Right cardiac atrium (tissue), 5 donors: ENCODE measurements at regions of chr5 and their contacts with region 1.

Region 1: DNA sequence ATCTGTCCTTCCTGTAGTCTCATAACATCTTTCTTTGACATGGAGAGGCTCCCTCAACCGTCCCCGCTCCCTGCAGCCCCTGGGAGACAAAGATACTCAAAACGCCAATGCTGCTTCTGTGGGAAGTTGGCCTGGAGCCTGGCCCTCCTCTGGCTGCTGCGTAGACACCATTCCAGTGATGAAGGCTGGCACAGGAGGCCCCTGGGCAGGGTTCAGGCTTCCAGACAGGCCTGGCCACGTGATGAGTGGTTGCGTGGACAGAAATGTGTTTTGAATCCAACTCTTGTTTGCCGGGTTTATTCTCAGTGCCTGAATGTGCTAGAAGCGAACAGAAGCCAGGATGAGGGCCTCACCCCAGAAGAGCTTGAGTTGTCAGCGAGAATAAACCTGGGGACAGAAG is 43.2 kb upstream of the NKX2-5 start:
- DNase-seq: peak; percentile 72 to 91 (median 88)
- ATAC-seq: peak; percentile 89 to 90
- H3K4me3 ChIP-seq: no peak overlapping the region
- H3K27ac ChIP-seq: peak overlapping the region; percentile 87
- H3K4me1 ChIP-seq: no peaks in the 10 kb centered on the region
- H3K27me3 ChIP-seq: no peaks in the 10 kb centered on the region

Region 2: DNA sequence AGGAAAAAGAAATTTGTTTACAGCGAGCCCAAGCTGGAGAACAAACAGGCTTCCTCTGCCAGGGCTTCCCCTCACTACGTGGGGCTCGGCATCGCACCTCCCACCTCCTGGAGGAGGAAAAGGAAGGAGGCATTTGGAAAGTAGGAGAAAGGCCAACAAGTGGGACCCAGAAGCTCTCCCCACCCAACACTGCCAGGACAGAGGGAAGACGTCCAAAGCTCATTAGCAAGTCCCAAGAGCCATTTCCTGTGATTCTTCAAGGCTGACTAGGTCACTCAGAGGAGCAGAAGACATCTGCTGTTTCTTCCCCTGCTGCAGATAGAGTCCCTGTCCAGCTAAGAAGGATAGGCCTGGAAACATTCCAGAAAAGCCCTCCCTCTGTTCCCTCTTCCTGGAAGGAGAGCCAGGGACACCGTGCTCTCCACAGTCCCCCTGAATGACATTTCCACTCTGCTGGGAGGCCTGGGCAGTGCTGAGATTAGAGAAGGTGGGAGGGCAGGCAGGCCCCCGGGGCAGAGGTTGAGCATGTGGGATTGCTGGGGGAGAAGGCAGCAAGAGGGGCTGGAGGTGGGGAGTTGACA is 694.2 kb before region 1 on chr5:
- intact Hi-C with region 1: no loop called
- DNase-seq: peak; percentile 67 to 85 (median 84)
- ATAC-seq: peak; percentile 87 to 88
- H3K4me3 ChIP-seq: no peak overlapping the region
- H3K27ac ChIP-seq: peak overlapping the region; percentile 98
- H3K4me1 ChIP-seq: peaks cover 36% of the 10 kb centered on the region
- H3K27me3 ChIP-seq: no peaks in the 10 kb centered on the region

Region 3: DNA sequence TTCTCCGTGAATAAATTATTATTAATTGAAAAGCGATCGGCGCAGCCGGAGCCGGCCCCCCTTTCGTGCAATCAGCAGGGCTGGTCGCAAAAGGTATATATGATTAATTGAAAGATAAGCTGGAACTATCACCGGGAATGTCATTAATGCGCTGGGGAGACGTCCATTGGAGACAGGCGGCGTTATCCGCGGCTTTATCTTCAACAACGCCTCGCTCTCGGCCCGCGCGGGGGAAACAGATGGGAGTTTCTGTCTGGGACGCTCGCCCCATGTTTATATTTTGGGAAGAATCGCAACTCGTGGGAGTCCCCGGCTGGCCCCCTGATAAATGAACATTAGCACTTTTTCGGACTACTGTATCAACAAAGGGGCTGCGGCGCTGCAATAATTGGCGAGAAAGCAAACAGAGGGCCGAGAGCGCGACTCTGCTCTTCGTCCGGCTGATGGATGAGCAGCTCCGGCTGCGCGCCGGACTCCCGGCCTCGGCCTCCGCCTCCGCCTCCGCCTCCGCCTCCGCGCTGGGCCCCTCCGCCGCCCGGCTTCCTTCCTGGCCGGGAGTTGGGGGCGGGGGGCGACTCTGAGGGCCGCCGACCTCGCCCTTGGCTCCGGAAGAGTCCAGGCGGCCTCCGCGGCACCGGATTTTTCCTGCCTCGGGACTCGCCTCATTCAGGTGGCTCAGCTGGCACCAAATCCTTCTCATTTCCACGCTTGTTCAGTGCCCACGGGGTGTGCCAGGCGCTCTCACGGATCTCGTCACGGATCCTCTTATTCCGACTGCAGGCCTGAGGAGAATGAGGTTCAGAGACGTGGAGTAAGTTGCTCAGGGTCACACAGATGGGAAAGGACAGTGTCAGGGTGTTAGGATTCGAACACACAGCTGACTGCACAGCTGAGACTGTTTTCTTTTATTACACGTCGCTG is 39.6 kb before region 1 on chr5:
- intact Hi-C with region 1: loop called in 2 of 4 experiments (anchors 5 kb)
- DNase-seq: peak in 1 of 3 donors; percentile 55
- ATAC-seq: no peak
- H3K4me3 ChIP-seq: peak overlapping the region; percentile 56
- H3K27ac ChIP-seq: peak overlapping the region; percentile 92
- H3K4me1 ChIP-seq: no peaks in the 10 kb centered on the region
- H3K27me3 ChIP-seq: no peaks in the 10 kb centered on the region

Region 4: DNA sequence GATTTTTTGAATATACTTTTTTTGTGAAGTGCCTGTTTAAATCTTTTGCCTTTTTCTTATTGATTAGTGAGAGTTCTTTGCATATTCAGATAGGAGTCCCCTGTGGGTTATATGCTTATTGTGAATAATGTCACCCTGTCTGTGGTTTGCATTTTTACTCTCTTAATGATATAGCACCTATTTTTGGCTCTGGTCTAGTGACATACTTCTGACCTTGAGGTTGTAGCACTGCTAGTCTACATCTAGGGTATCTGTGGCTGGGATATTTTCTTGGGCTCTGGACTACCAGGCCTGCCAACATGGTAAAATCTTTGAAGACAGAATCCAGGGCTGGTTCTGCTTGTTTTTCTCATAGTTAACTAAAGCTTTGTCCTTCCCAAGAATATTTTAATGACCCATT is 29.7 kb before region 1 on chr5:
- intact Hi-C with region 1: loop called in 2 of 4 experiments (anchors 2 to 5 kb)
- DNase-seq: no peak
- ATAC-seq: no peak
- H3K4me3 ChIP-seq: no peak overlapping the region
- H3K27ac ChIP-seq: no peak overlapping the region
- H3K4me1 ChIP-seq: peaks cover 3% of the 10 kb centered on the region
- H3K27me3 ChIP-seq: no peaks in the 10 kb centered on the region